Aorta (tissue), 5 donors: ENCODE measurements at regions of chr6 and their contacts with region 1.

Region 1: GRCh38 chr6:17599885-17600526 is at the start of gene FAM8A1:
- DNase-seq: peak; percentile 98 to 99
- ATAC-seq: peak; percentile 98
- H3K4me3 ChIP-seq: peak within 1 kb of the TSS; percentile 90 to 91
- H3K27ac ChIP-seq: peak within 1 kb of the TSS; percentile 82 to 91
- H3K4me1 ChIP-seq: peaks cover 0 to 4% of the 10 kb centered on the region in 2 donors
- H3K27me3 ChIP-seq: no peaks in the 10 kb centered on the region
- total RNA-seq, gene FAM8A1: 28.1 to 29.1 TPM

Region 2: DNA sequence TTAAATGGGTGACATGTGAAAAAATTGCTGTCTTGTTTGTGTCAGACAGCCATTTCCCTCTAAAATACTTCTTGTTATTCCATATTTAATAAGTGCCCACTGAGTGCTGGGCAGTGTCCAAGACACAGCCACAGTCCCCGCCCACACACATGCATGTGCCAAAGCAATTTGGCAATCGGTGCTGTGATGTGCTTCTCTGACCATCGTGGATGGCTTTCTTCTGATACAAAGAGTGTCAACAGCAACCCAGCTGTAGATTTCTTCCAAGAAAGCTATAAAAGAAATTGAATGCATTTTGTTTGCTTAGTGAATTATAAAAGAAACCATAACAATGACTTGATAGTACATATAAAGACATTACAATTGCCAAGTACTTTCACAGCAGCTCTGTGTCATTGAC is 698.2 kb before region 1 on chr6:
- intact Hi-C with region 1: no loop called
- DNase-seq: peak; percentile 78 to 82
- ATAC-seq: peak; percentile 62
- H3K4me3 ChIP-seq: no peak overlapping the region
- H3K27ac ChIP-seq: no peak overlapping the region
- H3K4me1 ChIP-seq: no peaks in the 10 kb centered on the region
- H3K27me3 ChIP-seq: peaks cover 0 to 3% of the 10 kb centered on the region in 2 donors

Region 3: DNA sequence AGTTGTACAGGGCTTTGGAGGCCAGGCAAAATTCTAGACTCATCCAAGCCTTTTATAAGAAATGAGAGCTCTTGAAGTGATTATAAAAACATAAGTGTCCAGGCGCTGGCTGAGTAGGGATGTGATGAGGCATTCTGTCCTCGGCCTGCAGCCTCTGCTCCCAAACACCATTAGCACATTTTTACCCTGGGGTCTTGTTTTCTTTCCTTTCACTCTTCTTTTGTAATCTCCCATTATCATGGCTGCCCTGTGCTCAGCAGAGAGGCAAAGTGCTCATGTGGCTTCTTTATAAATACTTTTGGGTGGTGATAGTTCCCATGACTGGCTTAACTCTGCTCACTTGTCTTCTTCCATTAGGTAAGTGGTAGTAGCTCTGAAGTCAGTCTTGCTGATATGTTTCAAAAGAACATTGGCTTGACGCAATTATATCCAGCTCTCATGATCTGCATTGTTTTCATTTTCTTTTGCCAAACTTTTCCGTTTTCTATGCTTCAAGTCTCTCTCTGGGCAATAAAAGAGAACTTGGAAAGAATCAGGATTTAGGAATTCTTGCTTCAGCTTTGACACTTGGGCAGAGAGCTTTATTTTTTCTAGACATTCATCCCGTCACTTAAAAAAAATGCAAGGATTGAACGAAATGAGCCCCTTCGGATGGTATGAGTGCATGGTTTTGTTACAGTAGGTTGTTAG is 145.5 kb before region 1 on chr6:
- intact Hi-C with region 1: no loop called
- DNase-seq: no peak
- ATAC-seq: peak; percentile 56
- H3K4me3 ChIP-seq: no peak overlapping the region
- H3K27ac ChIP-seq: no peak overlapping the region
- H3K4me1 ChIP-seq: peaks cover 0 to 2% of the 10 kb centered on the region in 2 donors
- H3K27me3 ChIP-seq: no peaks in the 10 kb centered on the region

Region 4: DNA sequence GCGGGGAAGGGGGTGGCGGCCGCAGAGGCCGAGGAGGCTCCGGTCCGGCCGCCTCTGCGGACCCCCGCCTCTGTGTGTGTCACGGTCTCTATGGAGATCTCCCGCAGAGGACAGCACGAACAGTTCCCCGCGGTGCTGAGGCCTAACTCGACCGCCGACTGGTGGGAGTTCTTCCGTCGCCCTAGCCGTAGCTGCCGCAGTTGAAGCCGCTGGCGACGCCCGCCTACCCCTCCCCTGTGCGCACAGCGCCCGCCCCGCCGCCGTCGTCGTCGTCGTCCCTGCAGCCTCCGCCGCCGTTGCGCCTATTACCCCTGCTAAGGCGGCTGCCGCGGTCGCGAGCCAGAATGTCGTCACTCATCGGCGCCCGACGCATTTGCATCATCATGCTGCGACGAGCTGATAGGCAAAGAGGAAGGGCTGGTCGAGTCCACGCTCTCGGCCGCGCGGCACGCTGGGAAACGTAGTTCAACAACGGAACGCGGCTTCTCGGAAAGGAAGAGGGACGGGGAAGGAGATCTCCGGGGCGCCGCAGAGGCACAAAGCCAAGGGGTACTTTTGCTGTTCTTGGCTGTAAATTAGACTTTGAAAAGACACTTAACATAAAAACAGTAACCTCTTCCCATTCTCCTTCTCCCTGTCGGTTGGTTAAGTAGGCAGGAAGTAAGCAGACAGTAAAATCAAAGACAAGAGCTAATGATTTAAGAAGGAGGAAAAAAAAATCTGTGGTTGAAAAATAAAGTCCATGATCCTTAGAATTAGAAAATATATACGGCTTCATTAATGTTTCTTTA is 106.8 kb after region 1 on chr6 and contains the start of gene NUP153:
- intact Hi-C with region 1: loop called in 1 of 2 experiments (anchors 1 kb)
- DNase-seq: peak; percentile 99 to 100
- ATAC-seq: peak; percentile 94
- H3K4me3 ChIP-seq: peak within 1 kb of the TSS; percentile 77 to 78
- H3K27ac ChIP-seq: peak within 1 kb of the TSS; percentile 84 to 87
- H3K4me1 ChIP-seq: no peaks in the 10 kb centered on the region
- H3K27me3 ChIP-seq: no peaks in the 10 kb centered on the region
- total RNA-seq, gene NUP153: 34.4 to 42.0 TPM